Calu3 (cell line): ENCODE measurements at regions of chr3 and their contacts with region 1.

Region 1: GRCh38 chr3:177294221-177294620 is 96.9 kb upstream of the TBL1XR1 start:
- DNase-seq: peak; percentile 49
- H3K4me3 Mint-ChIP-seq: no peak overlapping the region
- H3K27ac Mint-ChIP-seq: peak overlapping the region; percentile 72
- H3K4me1 Mint-ChIP-seq: peaks cover 43% of the 10 kb centered on the region
- H3K27me3 Mint-ChIP-seq: no peaks in the 10 kb centered on the region
- CTCF ChIP-seq: no peak

Region 2: DNA sequence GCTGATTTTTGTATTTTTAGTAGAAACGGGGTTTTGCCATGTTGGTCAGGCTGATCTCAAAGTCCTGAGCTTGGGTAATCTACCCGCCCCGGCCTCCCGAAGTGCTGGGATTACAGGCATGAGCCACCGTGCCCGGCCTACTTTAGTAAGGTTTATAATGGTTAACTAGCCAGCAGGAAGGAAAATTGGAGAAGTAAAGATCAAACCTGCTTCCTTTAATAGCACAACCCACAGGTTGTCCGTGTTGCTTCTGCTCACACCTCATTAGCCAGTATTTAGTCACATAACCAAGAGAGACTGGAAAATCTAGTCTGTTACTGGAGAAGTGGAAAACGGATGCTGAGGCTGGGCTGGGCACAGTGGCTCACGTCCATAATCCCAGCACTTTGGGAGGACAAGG is 45.0 kb before region 1 on chr3:
- CTCF ChIA-PET with region 1: no interaction called
- intact Hi-C with region 1: loop called (anchors 2 kb)
- DNase-seq: peak; percentile 57
- H3K4me3 Mint-ChIP-seq: peak overlapping the region; percentile 13
- H3K27ac Mint-ChIP-seq: peak overlapping the region; percentile 5
- H3K4me1 Mint-ChIP-seq: peaks cover 13% of the 10 kb centered on the region
- H3K27me3 Mint-ChIP-seq: no peaks in the 10 kb centered on the region
- CTCF ChIP-seq: no peak

Region 3: DNA sequence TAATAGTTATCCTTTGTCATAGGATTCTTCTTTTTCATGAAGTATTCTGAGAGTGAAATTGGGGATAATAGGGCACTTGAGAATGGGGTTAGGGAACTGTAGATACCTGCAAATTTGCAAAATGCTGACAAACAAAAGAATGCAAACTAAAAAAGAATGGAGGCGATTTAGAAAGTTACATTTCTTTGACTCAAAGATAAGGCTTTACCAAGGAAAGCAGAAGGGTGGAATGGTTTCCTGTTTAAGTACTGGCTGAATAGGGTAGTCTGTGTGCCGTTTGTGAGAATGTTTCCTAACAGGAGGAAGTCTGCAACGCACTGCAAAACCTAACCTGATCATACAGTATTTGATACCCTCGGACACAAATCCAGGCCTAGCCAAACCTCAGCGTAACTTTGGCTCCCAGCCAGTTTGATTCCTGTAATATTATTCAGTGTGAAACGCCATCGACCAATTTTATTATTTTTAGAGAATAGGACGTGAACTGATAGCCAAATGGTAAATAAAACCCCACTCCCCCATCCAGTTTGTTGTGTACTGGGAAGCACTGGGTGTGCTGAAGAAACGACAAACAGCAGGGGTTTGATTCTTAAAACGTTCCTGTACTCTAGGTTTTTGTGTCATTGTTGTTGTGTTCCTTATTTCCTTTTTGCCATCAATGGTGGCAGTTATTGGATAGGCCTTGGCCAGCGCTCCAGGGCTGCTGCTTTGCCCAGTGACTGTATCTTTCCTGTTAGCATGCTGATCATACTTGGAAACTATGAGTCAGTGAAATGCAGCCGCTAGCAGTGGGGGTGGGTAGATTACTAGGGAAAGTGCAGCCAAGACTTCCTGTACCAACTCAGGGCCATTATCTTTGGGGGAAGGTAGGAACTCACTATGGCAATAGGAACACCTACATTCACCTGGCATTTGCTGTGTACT is 51.1 kb after region 1 on chr3:
- CTCF ChIA-PET with region 1: no interaction called
- intact Hi-C with region 1: loop called (anchors 2 kb)
- DNase-seq: peak; percentile 93
- H3K4me3 Mint-ChIP-seq: peak overlapping the region; percentile 63
- H3K27ac Mint-ChIP-seq: peak overlapping the region; percentile 100
- H3K4me1 Mint-ChIP-seq: peaks cover 74% of the 10 kb centered on the region
- H3K27me3 Mint-ChIP-seq: no peaks in the 10 kb centered on the region
- CTCF ChIP-seq: no peak

Region 4: GRCh38 chr3:177679568-177680441 is 385.6 kb after region 1 on chr3:
- CTCF ChIA-PET with region 1: no interaction called
- intact Hi-C with region 1: loop called (anchors 5 kb)
- DNase-seq: no peak
- H3K4me3 Mint-ChIP-seq: no peak overlapping the region
- H3K27ac Mint-ChIP-seq: no peak overlapping the region
- H3K4me1 Mint-ChIP-seq: peaks cover 9% of the 10 kb centered on the region
- H3K27me3 Mint-ChIP-seq: no peaks in the 10 kb centered on the region
- CTCF ChIP-seq: no peak